ENCODE measurements at regions of chr5 and their contacts with region 1.

Region 1: DNA sequence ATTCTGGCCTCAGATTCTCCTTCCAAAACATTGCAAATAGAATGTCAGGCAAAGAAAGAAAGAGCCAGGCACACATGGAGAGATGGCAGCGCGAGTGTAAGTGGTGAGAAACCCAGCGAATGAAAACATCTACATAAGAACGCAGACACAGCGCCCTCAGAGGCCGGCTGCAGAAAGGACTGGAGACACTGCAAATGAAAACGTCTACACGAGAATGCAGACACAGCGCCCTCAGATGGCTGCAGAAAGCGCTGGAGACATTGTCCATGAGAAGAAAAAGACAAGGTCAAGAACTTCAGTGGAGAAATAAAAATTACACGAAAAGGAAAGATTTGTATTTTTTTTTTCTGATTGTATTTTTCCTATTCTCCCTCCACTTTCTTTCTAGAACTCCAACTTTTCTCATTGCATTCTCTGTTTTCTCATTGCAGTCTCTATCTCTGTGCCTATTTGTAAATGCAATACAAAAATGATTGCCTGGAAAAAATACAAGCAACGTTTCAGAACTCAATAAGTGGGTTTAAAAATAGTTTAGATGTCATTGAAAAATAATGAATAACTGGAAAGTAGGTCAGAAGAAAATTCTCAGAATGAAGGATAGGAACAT is 117.9 kb upstream of the LPCAT1 start:
- DNase-seq: peak; percentile 54 to 80 (median 72)
- H3K4me3 ChIP-seq: no peak overlapping the region
- H3K4me3 Mint-ChIP-seq: peak overlapping the region in 2 of 7 donors; percentile 22 to 37
- H3K27ac ChIP-seq: no peak overlapping the region
- H3K27ac Mint-ChIP-seq: peak overlapping the region in 3 of 8 donors; percentile 38 to 58 (median 40)
- H3K4me1 ChIP-seq: peaks cover 8% of the 10 kb centered on the region
- H3K4me1 Mint-ChIP-seq: peaks cover 8 to 16% (median 11%) of the 10 kb centered on the region in 3 donors
- H3K27me3 ChIP-seq: peaks cover 27% of the 10 kb centered on the region
- H3K27me3 Mint-ChIP-seq: peaks cover 31 to 32% of the 10 kb centered on the region in 2 donors

Region 2: DNA sequence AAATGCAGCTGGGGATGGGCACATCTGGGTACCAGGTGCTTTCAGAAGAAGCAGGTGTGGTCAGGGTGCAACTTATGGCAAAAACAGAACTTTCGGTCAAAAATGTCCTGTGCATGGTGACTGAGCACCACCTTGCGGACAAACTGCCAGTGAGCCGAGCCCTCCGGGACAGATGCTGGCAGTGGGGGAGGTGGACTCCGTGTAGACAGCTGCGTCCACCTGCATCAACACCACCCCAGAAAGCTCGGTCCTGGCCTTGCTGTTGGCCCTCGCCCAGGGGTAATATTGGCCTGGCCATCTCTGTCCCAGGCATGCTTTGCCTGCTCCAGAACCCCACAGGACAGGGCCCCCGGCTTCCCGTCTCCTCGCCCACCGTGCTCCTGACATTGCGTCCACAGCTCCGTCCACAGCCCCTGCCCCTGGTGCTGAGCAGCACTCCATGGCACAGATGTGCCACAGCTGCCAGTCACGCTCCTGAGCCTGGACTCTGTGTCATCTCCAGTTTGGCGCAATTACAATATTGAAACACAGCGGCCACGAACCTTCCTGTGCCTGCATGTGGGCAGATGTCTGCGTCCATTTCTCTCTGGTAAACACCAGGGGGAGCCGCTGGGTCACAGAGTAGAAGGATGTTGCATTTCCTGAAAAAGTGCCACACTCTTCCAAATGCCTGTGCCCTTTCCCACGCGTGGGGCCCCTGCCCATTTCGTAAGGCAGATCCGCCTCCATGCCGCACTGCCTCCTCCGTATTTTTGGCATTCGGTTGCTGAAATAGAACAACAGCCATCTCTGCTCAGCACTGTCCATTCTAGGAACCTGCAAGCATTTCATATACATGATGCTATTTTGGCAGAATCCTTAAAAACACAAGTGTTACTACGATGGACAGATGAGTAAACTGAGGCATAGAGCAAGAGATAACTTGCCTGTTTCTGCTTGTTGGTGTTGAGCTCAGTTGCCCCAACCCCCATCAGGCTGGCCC is 473.6 kb before region 1 on chr5:
- CTCF ChIA-PET with region 1: interaction called, 36 read pairs
- POLR2A ChIA-PET with region 1: no interaction called
- DNase-seq: peak; percentile 54 to 74 (median 63)
- H3K4me3 ChIP-seq: no peak overlapping the region
- H3K4me3 Mint-ChIP-seq: peak overlapping the region; percentile 34 to 85 (median 83)
- H3K27ac ChIP-seq: no peak overlapping the region
- H3K27ac Mint-ChIP-seq: peak overlapping the region in 3 of 8 donors; percentile 30 to 73 (median 63)
- H3K4me1 ChIP-seq: peaks cover 4% of the 10 kb centered on the region
- H3K4me1 Mint-ChIP-seq: peaks cover 14 to 19% (median 14%) of the 10 kb centered on the region in 3 donors
- H3K27me3 ChIP-seq: peaks cover under 1% of the 10 kb centered on the region
- H3K27me3 Mint-ChIP-seq: peaks cover 2 to 25% of the 10 kb centered on the region in 2 donors

Region 3: DNA sequence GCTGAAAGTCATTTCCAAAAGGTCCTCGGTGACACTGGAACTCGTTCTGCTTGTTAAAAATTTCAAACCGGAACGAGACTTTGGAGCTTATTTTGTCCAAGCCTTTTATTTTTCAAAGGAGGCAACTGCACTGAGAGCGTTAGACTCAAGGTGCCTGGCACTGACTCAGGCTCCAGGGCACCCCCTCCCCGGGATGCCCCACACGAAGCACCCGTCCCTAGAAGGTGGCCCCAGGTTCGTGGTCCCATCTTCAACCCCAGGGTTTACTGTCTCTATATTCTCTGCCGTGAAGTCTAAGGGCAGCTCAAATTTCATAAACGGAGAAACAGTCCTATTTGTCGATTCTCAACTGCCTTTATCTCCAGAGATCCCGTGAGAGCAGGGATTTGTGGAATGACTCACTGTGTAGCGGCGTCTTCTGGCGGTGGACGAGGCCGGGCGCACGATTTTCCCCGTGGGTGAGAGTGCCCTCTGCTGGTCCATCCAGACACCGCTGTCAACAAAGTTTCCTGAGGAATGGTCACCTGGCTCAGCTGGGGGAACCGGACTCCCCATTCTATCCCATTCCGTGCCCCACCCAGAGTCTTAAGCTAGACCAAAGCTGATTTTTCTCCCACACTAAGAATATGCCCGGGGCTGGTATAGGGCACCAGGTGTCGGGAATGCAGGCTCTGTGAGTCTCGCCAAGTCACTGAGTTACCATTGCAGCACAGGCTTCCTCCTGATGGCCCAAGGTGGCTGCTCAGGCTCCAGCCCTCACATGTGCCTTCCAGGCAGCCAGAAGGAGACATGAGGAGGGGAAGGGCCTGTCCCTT is 467.3 kb before region 1 on chr5:
- CTCF ChIA-PET with region 1: interaction called, 36 read pairs
- POLR2A ChIA-PET with region 1: no interaction called
- DNase-seq: peak in 1 of 5 donors; percentile 41
- H3K4me3 ChIP-seq: no peak overlapping the region
- H3K4me3 Mint-ChIP-seq: peak overlapping the region in 1 of 7 donors; percentile 54
- H3K27ac ChIP-seq: no peak overlapping the region
- H3K27ac Mint-ChIP-seq: no peak overlapping the region
- H3K4me1 ChIP-seq: no peaks in the 10 kb centered on the region
- H3K4me1 Mint-ChIP-seq: peaks cover 5 to 12% (median 10%) of the 10 kb centered on the region in 3 donors
- H3K27me3 ChIP-seq: no peaks in the 10 kb centered on the region
- H3K27me3 Mint-ChIP-seq: peaks cover 0 to 9% of the 10 kb centered on the region in 2 donors

Region 4: DNA sequence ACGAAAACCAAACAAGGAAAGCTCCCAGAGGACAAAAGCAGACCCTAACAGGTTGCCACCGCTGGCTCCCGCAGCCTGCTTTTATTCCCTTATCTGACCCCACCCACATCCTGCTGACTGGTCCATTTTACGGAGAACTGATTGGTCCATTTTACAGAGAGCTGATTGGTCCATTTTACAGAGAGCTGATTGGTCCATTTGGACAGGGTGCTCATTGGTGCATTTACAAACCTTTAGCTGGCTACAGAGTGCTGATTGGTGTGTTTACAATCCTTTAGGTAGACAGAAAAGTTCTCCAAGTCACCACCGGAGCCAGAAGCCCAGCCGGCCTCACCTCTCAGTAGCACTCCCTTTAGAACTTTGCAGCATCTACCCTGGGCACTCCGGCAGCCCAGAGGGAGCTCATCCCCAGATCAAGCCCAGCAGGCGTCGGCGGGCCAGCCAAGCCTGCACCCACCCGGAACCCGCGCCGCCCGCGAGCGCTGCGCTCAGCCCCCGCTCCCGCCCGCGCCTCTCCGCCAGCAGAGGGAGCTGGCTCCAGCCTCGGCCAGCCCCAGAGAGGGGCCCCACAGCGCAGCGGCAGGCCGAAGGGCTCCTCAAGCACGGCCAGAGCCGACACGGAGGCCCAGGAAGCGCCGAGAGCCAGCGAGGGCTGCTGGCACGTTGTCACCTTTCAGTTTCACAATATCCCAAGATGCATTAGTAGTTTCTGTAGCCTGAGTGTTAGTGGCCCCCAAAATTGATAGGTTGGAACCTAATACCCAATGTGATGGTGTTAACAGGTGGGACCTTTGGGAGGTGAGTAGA is 261.4 kb before region 1 on chr5:
- CTCF ChIA-PET with region 1: interaction called, 37 read pairs
- POLR2A ChIA-PET with region 1: no interaction called
- DNase-seq: peak; percentile 43 to 69 (median 67)
- H3K4me3 ChIP-seq: peak overlapping the region; percentile 38
- H3K4me3 Mint-ChIP-seq: peak overlapping the region; percentile 60 to 81 (median 72)
- H3K27ac ChIP-seq: no peak overlapping the region
- H3K27ac Mint-ChIP-seq: peak overlapping the region in 7 of 8 donors; percentile 11 to 90 (median 60)
- H3K4me1 ChIP-seq: peaks cover 9% of the 10 kb centered on the region
- H3K4me1 Mint-ChIP-seq: peaks cover 16 to 30% (median 18%) of the 10 kb centered on the region in 3 donors
- H3K27me3 ChIP-seq: no peaks in the 10 kb centered on the region
- H3K27me3 Mint-ChIP-seq: peaks cover 0 to 9% of the 10 kb centered on the region in 2 donors

Region 5: GRCh38 chr5:1479581-1480188 is 162.0 kb before region 1 on chr5:
- CTCF ChIA-PET with region 1: interaction called, 13 read pairs
- POLR2A ChIA-PET with region 1: no interaction called
- DNase-seq: peak; percentile 37 to 70 (median 45)
- H3K4me3 ChIP-seq: no peak overlapping the region
- H3K4me3 Mint-ChIP-seq: no peak overlapping the region
- H3K27ac ChIP-seq: no peak overlapping the region
- H3K27ac Mint-ChIP-seq: peak overlapping the region in 6 of 8 donors; percentile 66 to 94 (median 79)
- H3K4me1 ChIP-seq: no peaks in the 10 kb centered on the region
- H3K4me1 Mint-ChIP-seq: peaks cover 8 to 24% (median 16%) of the 10 kb centered on the region in 3 donors
- H3K27me3 ChIP-seq: no peaks in the 10 kb centered on the region
- H3K27me3 Mint-ChIP-seq: no peaks in the 10 kb centered on the region

Region 6: DNA sequence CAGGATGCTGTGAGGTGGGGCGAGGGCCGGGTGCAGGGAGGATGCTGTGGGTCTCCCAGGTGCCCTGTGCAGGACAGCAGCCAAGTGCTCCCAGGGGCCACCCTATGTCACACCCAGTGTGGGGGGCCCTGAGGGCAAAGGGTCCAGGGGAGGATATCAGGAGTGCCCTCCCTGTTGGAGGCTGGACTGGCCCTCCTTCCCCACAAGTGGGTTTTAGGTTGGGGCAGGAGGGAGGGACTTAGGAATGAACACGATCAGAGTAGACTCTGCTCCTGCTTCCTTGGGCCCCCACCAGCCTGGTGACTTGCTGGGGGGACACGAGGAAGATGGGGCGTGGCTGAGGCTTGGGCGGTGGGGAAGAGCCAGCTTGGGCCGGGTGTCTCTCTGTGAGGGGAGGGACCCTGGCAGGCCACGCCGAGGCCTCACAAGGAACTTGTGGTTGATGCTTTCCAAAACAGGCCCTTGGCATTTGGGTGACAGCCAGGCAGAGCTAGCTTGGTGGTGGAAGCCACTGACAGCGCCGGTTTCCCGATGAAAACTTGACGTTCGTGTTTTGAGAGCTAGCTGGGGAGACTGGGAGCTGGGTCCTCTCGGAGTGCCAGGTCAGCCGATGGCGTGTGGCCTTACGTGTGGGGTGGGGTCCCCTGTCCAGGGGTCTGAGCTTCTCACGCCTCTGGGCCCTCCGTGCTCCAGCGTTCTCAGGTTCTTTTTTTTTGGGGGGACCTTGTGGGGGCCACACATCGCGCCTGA is 11.1 kb after region 1 on chr5:
- CTCF ChIA-PET with region 1: interaction called, 10 read pairs
- POLR2A ChIA-PET with region 1: no interaction called
- DNase-seq: no peak
- H3K4me3 ChIP-seq: no peak overlapping the region
- H3K4me3 Mint-ChIP-seq: peak overlapping the region in 1 of 7 donors; percentile 65
- H3K27ac ChIP-seq: no peak overlapping the region
- H3K27ac Mint-ChIP-seq: no peak overlapping the region
- H3K4me1 ChIP-seq: no peaks in the 10 kb centered on the region
- H3K4me1 Mint-ChIP-seq: peaks cover 1 to 5% (median 4%) of the 10 kb centered on the region in 3 donors
- H3K27me3 ChIP-seq: peaks cover 10% of the 10 kb centered on the region
- H3K27me3 Mint-ChIP-seq: peaks cover 25 to 59% of the 10 kb centered on the region in 2 donors